ENCODE measurements at regions of chr4 and their contacts with region 1.

Region 1: GRCh38 chr4:124486426-124486825 is 226.1 kb downstream of the ANKRD50 start:
- DNase-seq: no peak
- H3K4me3 ChIP-seq: no peak overlapping the region
- H3K27ac ChIP-seq: no peak overlapping the region
- H3K4me1 ChIP-seq: no peaks in the 10 kb centered on the region
- H3K27me3 ChIP-seq: no peaks in the 10 kb centered on the region
- CTCF ChIP-seq: peak; percentile 2 to 16

Region 2: GRCh38 chr4:124537971-124538370 is 51.5 kb after region 1 on chr4:
- CTCF ChIA-PET with region 1: no interaction called
- dilution Hi-C with region 1: no loop called
- in situ Hi-C with region 1: no loop called
- intact Hi-C with region 1: no loop called
- DNase-seq: no peak
- H3K4me3 ChIP-seq: no peak overlapping the region
- H3K27ac ChIP-seq: no peak overlapping the region
- H3K4me1 ChIP-seq: no peaks in the 10 kb centered on the region
- H3K27me3 ChIP-seq: no peaks in the 10 kb centered on the region
- CTCF ChIP-seq: no peak

Region 3: DNA sequence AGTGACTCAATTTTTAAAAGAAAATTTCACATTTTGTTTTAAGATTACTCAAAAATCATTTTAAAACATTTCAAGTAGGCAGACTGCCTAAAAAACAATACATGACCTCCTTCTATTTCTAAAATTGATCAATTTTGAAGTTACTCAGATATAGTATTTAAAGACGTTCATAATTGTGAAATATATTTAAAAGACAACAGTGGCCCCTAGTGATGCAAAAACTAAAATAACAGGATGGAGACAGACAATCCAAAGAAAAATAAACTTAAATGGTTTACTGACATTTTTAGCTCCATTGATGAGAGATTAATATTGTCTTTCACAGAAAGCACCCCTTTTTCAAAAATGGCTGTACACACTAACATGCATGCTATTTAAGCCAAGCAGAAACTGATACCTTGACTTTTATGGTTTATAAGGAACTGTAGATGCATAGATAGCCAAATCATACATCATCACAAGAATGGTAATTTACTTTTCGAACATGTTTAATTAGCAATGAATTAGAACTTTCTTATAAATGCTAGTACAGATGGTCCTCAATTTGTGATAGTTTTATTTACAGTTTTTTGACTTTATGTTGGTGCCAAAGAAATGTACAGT is 758.5 kb after region 1 on chr4:
- CTCF ChIA-PET with region 1: no interaction called
- dilution Hi-C with region 1: no loop called
- in situ Hi-C with region 1: no loop called
- intact Hi-C with region 1: loop called (anchors 2 kb)
- DNase-seq: peak; percentile 14
- H3K4me3 ChIP-seq: no peak overlapping the region
- H3K27ac ChIP-seq: no peak overlapping the region
- H3K4me1 ChIP-seq: peaks cover 7% of the 10 kb centered on the region
- H3K27me3 ChIP-seq: no peaks in the 10 kb centered on the region
- CTCF ChIP-seq: peak; percentile 27 to 36

Region 4: GRCh38 chr4:125283707-125284279 is 797.4 kb after region 1 on chr4:
- CTCF ChIA-PET with region 1: no interaction called
- dilution Hi-C with region 1: no loop called
- in situ Hi-C with region 1: no loop called
- intact Hi-C with region 1: loop called (anchors 2 kb)
- DNase-seq: peak; percentile 12
- H3K4me3 ChIP-seq: no peak overlapping the region
- H3K27ac ChIP-seq: no peak overlapping the region
- H3K4me1 ChIP-seq: no peaks in the 10 kb centered on the region
- H3K27me3 ChIP-seq: no peaks in the 10 kb centered on the region
- CTCF ChIP-seq: peak; percentile 26 to 44